ENCODE measurements at regions of chr12 and their contacts with region 1.

Region 1: DNA sequence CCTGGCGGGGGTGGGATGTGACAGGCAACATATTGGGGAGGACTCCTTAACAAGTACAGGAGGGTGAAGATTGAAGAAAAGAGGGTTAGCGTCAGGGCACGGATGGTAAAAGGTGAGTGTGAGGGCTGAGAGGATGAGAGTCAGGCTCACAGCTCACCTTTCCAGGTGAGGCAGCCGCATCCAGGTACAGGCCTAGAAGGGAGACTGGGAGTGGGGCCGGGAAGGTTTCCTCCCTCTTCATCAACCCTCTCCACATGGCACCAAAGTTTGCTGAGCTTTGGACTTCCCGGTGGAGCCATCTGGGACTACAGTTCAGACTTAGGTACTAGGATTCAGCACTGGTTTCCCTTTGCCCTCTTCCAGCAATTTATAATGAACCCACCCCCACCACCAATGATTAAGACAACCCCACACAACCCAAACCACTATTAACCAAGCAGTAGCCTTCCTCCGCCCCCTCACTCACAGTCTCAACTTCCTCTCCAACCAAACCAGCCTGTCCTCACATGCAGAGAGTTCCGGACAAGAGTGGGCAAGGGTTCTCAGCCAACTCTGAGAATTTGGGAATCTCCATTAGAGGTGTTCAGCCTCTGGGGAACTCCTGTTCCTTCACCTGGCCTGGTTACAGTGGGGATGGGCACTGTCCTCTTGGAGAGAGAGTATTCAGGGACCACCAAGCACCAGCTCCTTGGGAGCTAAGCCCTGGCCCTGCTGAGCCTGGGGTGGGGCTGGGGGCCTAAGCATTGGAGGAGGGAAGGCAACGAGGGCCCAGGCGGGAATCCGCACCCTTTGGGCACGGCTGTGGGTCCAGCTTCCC is 2.4 kb upstream of the HOXC4 start:
- DNase-seq: no peak
- ATAC-seq: no peak; the same call in 1 of the 2 replicates
- H3K4me3 ChIP-seq: peak overlapping the region; percentile 57; the same call in 1 of the 2 replicates
- H3K27ac ChIP-seq: no peak overlapping the region
- H3K4me1 ChIP-seq: peaks cover 17% of the 10 kb centered on the region
- H3K27me3 ChIP-seq: peaks cover 8% of the 10 kb centered on the region; the same call in 1 of the 2 replicates
- CTCF ChIP-seq: no peak

Region 2: DNA sequence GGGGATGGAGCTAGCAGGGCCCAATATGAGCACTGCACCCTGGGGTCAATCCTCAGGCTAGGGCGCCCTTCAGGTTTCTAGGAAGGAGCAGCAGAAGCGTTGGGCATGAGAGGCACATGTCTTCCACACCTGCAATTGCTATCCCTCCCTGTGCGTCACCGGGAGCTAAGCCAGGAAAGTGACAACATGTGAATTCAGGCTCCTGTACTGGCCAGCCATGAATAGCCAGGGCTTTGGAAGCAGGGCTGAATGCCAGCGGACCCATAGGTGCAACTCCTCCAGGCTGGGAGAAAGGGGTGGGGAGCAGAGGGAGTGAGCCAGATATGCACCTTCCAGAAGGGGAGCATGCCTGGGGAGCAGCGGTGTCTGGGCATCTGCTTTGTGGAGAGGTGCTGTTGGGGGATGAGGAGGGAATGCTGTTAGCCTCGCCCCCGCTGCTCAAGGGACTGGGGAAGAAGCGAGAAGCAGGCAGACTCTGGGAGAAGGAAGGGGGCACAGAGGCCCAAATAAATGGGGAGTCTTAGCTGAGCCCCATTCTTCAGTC is 12.3 kb before region 1 on chr12:
- CTCF ChIA-PET with region 1: interaction called, 13 read pairs
- POLR2A ChIA-PET with region 1: no interaction called
- intact Hi-C with region 1: no loop called
- DNase-seq: peak; percentile 56
- ATAC-seq: peak; percentile 33
- H3K4me3 ChIP-seq: no peak overlapping the region
- H3K27ac ChIP-seq: no peak overlapping the region
- H3K4me1 ChIP-seq: peaks cover 11% of the 10 kb centered on the region
- H3K27me3 ChIP-seq: no peaks in the 10 kb centered on the region
- CTCF ChIP-seq: no peak

Region 3: GRCh38 chr12:54975272-54975671 is 924.0 kb after region 1 on chr12:
- CTCF ChIA-PET with region 1: no interaction called
- POLR2A ChIA-PET with region 1: interaction called, 15 read pairs
- intact Hi-C with region 1: no loop called
- DNase-seq: no peak
- ATAC-seq: no peak
- H3K4me3 ChIP-seq: no peak overlapping the region
- H3K27ac ChIP-seq: no peak overlapping the region
- H3K4me1 ChIP-seq: no peaks in the 10 kb centered on the region
- H3K27me3 ChIP-seq: peaks cover 95% of the 10 kb centered on the region
- CTCF ChIP-seq: no peak